Activated CD4-positive, alpha-beta T cell treated with anti-CD3 and anti-CD28 coated beads for 36 hours (primary cell): ENCODE measurements at regions of chr19 and their contacts with region 1.

Region 1: DNA sequence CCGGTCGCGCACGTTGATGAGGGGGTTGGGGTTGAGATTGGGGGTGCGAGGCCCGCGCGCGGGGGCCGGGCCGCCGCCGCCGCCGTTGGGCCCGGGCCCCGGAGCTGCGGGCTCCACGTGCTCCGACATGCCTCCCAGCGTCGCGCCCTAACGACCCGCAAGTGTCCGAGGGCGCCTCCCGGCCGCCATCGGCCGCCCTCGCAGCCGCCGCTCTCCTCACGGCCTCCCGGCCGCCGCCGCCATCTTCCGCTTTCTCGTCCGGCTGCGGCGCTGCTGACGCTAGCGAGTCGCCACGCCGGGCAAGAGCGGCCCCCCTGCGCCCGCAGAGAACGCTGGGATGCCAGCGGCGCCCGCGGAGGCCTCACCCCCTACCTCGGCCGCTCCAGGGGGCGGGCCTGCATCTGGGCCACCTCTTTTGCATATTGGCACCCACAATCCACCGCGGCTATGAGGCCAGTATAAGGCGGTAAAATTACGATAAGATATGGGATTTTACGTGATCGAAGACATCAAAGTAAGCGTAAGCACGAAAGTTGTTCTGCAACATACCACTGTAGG is at the start of gene TMEM259:
- DNase-seq: peak; percentile 99
- ATAC-seq: peak; percentile 90
- H3K4me3 Mint-ChIP-seq: peak within 1 kb of the TSS; percentile 94
- H3K27ac Mint-ChIP-seq: peak within 1 kb of the TSS; percentile 96
- H3K4me1 Mint-ChIP-seq: peaks cover 35% of the 10 kb centered on the region
- H3K27me3 Mint-ChIP-seq: no peaks in the 10 kb centered on the region
- total RNA-seq, gene TMEM259: 106 to 128 TPM

Region 2: GRCh38 chr19:892243-893050 is 128.5 kb before region 1 on chr19:
- CTCF ChIA-PET with region 1: no interaction called
- POLR2A ChIA-PET with region 1: no interaction called
- intact Hi-C with region 1: loop called in 1 of 2 experiments (anchors 1 kb)
- DNase-seq: peak; percentile 33
- ATAC-seq: peak; percentile 37
- H3K4me3 Mint-ChIP-seq: peak overlapping the region; percentile 78
- H3K27ac Mint-ChIP-seq: peak overlapping the region; percentile 77
- H3K4me1 Mint-ChIP-seq: peaks cover 13% of the 10 kb centered on the region
- H3K27me3 Mint-ChIP-seq: no peaks in the 10 kb centered on the region

Region 3: DNA sequence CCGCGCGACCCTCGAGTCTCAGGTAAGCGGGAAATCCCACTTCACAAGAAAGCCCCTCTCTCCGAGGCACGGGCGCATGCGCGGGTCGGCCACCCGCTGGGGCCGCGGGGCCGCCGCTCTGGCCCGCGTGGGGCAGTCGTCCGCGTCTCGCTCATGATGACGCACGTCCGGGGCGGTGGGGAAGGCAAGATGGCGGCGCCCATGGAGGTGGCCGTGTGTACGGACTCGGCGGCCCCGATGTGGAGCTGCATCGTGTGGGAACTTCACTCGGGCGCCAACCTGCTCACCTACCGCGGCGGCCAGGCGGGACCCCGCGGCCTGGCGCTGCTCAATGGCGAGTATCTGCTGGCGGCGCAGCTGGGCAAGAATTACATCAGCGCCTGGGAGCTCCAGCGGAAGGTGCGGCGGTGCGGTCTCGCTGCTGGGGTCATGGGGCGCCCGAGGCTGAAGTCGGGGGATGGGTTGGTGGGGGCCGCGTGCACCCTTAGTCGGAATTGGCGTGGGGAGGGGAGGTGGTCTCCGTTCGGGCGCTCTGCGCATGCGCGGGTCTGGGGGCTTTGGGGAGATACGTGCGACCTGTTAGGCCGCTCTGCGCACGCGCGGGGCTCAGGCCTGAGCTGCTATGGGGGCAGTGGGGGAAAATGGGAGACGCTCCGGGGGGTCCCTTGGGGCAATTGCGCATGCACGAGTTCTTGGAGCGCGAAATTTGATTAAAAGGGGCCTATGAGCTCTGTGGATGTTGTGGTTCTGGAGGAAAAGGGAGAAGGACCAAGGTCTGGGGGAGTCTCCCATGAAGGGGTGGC is 36.6 kb before region 1 on chr19 and contains the start of gene WDR18:
- CTCF ChIA-PET with region 1: interaction called, 4 read pairs
- POLR2A ChIA-PET with region 1: interaction called, 5 read pairs
- intact Hi-C with region 1: loop called in 1 of 2 experiments (anchors 1 kb)
- DNase-seq: peak; percentile 95
- ATAC-seq: peak; percentile 92
- H3K4me3 Mint-ChIP-seq: peak within 1 kb of the TSS; percentile 91
- H3K27ac Mint-ChIP-seq: peak within 1 kb of the TSS; percentile 86
- H3K4me1 Mint-ChIP-seq: peaks cover 14% of the 10 kb centered on the region
- H3K27me3 Mint-ChIP-seq: no peaks in the 10 kb centered on the region
- total RNA-seq, gene WDR18: 71.6 to 87.8 TPM

Region 4: DNA sequence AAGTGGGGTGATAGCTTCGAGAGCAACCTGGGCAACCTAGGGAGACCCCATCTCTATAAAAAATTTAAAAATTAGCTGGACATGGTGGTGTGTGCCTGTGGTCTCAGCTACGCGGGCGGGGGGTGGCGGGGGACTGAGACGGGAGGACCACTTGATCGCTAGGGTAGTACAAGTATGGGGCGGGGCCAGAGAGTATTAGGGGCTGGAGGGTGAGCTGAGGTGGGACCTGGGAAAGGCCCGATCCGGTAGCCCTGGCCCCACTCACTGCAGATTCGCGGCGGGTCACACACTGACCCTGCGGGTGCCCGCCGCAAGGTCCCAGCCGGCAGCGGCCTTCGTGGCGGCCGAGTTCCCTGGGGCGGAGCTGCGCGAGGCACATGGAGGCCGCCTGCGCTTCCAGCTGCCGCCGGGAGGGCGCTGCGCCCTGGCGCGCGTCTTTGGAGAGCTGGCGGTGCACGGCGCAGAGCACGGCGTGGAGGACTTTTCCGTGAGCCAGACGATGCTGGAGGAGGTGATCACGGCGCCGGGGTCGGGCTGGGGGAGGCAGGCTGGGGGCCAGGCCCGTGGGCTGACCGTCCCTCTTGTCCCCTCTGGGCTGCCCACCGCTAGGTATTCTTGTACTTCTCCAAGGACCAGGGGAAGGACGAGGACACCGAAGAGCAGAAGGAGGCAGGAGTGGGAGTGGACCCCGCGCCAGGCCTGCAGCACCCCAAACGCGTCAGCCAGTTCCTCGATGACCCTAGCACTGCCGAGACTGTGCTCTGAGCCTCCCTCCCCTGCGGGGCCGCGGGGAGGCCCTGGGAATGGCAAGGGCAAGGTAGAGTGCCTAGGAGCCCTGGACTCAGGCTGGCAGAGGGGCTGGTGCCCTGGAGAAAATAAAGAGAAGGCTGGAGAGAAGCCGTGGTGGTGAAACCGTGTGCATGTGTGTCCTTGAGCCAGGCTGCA is 44.0 kb after region 1 on chr19:
- CTCF ChIA-PET with region 1: interaction called, 5 read pairs
- POLR2A ChIA-PET with region 1: interaction called, 4 read pairs
- intact Hi-C with region 1: loop called (anchors 2 to 5 kb)
- DNase-seq: peak; percentile 86
- ATAC-seq: peak; percentile 48
- H3K4me3 Mint-ChIP-seq: no peak overlapping the region
- H3K27ac Mint-ChIP-seq: no peak overlapping the region
- H3K4me1 Mint-ChIP-seq: peaks cover 33% of the 10 kb centered on the region
- H3K27me3 Mint-ChIP-seq: no peaks in the 10 kb centered on the region

Region 5: DNA sequence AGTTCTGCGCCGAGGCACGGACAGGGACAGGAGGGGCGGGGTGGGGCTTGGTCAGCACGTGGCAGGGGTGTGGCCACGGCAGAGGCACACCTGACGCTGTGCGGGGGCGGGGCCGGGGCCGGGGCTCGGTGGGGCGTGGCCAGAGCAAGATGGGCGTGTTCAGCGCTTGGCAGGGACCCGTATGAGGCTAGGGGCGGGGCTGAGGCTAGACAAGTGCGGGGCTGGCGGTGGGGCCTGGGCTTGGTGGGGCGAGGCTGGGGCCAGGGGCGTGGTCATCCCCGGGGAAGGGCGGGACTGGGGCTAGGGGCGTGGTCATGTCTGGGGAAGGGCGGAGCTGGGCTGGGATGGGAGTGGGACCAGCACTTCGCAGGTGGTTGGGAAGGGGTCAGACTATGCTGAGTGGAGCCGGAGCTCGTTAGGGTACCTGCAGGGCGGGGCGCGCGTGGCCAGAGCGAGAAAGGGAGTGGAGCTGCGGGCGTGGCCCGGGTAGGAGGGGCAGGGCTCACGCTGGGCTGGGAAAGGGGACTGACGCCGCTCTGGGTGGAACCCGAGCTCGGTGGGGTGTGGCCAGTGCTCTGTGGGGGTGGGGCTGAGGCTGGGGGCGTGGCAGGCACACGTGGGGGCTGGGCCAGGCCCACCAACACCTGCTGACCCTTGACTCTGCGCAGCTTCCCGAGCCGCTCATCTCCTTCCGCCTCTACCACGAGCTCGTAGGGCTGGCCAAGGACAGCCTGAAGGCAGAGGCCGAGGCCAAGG is 61.4 kb after region 1 on chr19:
- CTCF ChIA-PET with region 1: no interaction called
- POLR2A ChIA-PET with region 1: interaction called, 8 read pairs
- intact Hi-C with region 1: loop called (anchors 1 to 2 kb)
- DNase-seq: peak; percentile 96
- ATAC-seq: peak; percentile 71
- H3K4me3 Mint-ChIP-seq: no peak overlapping the region
- H3K27ac Mint-ChIP-seq: no peak overlapping the region
- H3K4me1 Mint-ChIP-seq: peaks cover 60% of the 10 kb centered on the region
- H3K27me3 Mint-ChIP-seq: no peaks in the 10 kb centered on the region

Region 6: DNA sequence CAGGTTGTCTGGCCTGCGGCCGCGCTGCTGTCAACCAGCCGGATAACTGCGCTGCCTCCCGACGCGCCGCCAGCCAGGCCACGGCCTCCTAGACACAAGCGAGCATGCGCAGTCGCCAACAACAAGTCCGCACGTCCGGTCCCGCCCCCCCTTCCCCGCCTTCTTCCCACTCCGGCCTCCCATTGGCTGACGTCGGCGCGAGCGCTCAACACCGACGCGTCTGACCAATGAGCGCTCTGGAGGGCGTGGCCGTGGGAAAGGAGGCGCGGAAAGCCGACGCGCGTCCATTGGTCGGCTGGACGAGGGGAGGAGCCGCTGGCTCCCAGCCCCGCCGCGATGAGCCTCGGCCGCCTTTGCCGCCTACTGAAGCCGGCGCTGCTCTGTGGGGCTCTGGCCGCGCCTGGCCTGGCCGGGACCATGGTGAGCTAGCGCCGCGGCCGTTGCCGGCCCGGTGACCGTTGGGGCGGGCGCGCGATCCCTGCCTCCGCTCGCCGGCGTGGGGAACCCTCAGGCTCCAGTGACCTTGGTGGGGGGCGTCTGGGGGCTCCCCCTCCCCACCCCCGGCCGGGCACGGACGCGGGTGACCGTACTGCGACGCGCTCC is 82.9 kb after region 1 on chr19 and contains the start of gene GPX4:
- CTCF ChIA-PET with region 1: no interaction called
- POLR2A ChIA-PET with region 1: no interaction called
- intact Hi-C with region 1: loop called (anchors 1 kb)
- DNase-seq: peak; percentile 100
- ATAC-seq: peak; percentile 81
- H3K4me3 Mint-ChIP-seq: peak within 1 kb of the TSS; percentile 71
- H3K27ac Mint-ChIP-seq: peak within 1 kb of the TSS; percentile 83
- H3K4me1 Mint-ChIP-seq: peaks cover 52% of the 10 kb centered on the region
- H3K27me3 Mint-ChIP-seq: no peaks in the 10 kb centered on the region
- total RNA-seq, gene GPX4: 192 to 218 TPM

Region 7: DNA sequence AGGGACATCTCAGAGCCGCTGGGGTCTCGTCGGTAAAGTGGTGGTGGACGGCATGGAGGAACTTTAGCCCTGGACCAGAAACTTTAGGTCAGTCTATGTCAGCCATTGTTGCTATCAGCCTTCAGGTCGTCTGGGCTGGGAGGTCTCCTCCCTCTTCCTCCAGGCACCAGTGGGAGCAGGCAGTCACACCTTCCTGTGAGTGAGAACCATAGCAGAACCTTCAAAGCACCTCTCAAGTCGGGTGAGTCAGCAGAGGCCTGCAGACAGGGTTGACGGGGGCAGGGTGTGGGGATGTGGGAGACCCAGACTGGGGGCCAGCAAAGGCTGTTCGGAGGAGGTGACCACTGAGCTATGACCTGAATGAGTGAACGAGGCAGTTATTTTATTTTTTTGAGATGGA is 168.5 kb after region 1 on chr19:
- CTCF ChIA-PET with region 1: interaction called, 3 read pairs
- POLR2A ChIA-PET with region 1: interaction called, 6 read pairs
- intact Hi-C with region 1: loop called (anchors 5 kb)
- DNase-seq: peak; percentile 85
- ATAC-seq: peak; percentile 84
- H3K4me3 Mint-ChIP-seq: peak overlapping the region; percentile 38
- H3K27ac Mint-ChIP-seq: peak overlapping the region; percentile 69
- H3K4me1 Mint-ChIP-seq: peaks cover 34% of the 10 kb centered on the region
- H3K27me3 Mint-ChIP-seq: no peaks in the 10 kb centered on the region